ENCODE measurements at regions of chr1 and their contacts with region 1.

Region 1: DNA sequence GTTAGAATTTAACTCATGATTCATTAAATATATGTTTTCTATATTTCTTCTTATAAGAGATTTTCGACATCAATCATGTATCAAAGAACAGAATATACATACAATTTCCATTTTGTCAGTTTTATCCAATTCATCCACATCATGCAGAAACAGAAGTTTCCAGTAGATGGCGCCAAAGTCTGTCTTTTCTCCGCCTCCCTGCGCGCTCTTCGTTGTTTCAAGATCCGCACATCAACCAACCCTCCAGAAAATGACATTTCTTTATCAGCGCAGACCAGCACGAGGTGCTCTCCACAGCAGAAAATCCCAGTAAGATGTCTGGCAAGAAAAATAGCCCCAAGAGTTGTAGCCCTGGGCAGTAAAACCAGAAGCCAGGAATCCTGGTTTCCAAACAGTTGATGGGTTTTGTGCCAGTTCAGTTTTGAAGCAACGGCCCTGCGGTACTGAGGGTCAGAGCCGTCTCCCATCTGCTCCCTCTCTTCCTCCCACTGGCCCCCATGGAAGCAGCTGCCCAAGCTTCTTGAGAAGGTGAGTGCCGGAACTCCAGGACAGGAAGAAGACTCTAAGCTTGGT is 38.6 kb upstream of the GPR137B start:
- DNase-seq: no peak
- H3K4me3 ChIP-seq: no peak overlapping the region
- H3K27ac ChIP-seq: no peak overlapping the region
- H3K4me1 ChIP-seq: peaks cover 0 to 3% (median 0%) of the 10 kb centered on the region in 4 donors
- H3K27me3 ChIP-seq: no peaks in the 10 kb centered on the region
- CTCF ChIP-seq: peak; percentile 58 to 90 (median 67)
- EP300 ChIP-seq: no peak
- POLR2A ChIP-seq: no peak

Region 2: DNA sequence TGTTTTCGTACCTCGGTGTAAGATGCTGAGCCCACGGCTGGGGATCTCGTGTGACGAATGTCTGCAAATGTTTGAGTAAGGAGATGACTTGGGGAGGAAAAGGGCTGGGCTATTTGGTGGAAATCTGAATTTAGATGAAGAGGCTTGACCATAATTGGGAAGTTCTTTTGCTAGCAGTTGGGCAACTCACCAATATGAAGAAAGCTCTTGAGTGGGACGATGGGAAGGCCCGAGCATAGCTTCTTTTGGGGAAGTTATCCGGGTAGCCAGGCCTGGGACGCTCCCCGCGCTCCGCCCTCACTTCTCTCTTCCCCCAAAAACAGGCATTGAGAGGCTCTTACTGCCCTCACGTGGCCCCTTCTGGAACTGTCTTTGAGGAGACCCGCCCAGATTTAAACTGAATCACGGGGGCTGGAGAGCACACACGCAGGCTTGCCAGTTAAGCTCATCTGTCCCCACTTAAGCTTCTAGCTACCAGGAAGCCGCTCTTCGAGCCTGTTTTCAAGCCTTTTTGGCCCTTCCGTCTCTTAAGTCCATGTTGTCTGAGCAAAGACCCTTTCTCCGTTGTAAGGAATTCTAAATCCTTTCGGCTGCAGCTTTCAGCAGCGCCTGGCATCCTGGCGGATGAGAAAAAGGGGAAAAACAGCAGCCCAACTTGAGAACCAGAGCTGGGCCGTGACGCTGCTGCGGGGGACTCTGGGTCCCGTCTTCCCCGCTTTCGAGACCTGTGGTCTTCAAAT is 132.0 kb before region 1 on chr1:
- intact Hi-C with region 1: no loop called
- DNase-seq: peak; percentile 98
- H3K4me3 ChIP-seq: peak overlapping the region; percentile 10 to 52 (median 44)
- H3K27ac ChIP-seq: peak overlapping the region; percentile 88 to 98 (median 91)
- H3K4me1 ChIP-seq: peaks cover 0 to 22% (median 15%) of the 10 kb centered on the region in 4 donors
- H3K27me3 ChIP-seq: no peaks in the 10 kb centered on the region
- CTCF ChIP-seq: peak; percentile 76 to 82 (median 78)
- EP300 ChIP-seq: peak in 1 of 4 donors; percentile 3
- POLR2A ChIP-seq: peak; percentile 37 to 50

Region 3: GRCh38 chr1:236281654-236282424 is 178.1 kb after region 1 on chr1 and contains the start of gene ERO1B:
- intact Hi-C with region 1: loop called (anchors 5 kb)
- DNase-seq: peak; percentile 98
- H3K4me3 ChIP-seq: peak within 1 kb of the TSS; percentile 82 to 98 (median 94)
- H3K27ac ChIP-seq: peak within 1 kb of the TSS; percentile 87 to 92 (median 90)
- H3K4me1 ChIP-seq: peaks cover 0 to 16% (median 11%) of the 10 kb centered on the region in 4 donors
- H3K27me3 ChIP-seq: no peaks in the 10 kb centered on the region
- CTCF ChIP-seq: no peak
- EP300 ChIP-seq: peak in 1 of 4 donors; percentile 21
- POLR2A ChIP-seq: peak; percentile 80 to 91
- total RNA-seq, gene ERO1B: 9.0 to 17.2 (median 13.7) TPM

Region 4: GRCh38 chr1:236489710-236490377 is 386.1 kb after region 1 on chr1:
- intact Hi-C with region 1: loop called (anchors 1 kb)
- DNase-seq: no peak
- H3K4me3 ChIP-seq: no peak overlapping the region
- H3K27ac ChIP-seq: no peak overlapping the region
- H3K4me1 ChIP-seq: peaks cover 0 to 6% (median 2%) of the 10 kb centered on the region in 4 donors
- H3K27me3 ChIP-seq: no peaks in the 10 kb centered on the region
- CTCF ChIP-seq: peak in 3 of 4 experiments; percentile 42 to 64 (median 55)
- EP300 ChIP-seq: no peak
- POLR2A ChIP-seq: no peak

Region 5: DNA sequence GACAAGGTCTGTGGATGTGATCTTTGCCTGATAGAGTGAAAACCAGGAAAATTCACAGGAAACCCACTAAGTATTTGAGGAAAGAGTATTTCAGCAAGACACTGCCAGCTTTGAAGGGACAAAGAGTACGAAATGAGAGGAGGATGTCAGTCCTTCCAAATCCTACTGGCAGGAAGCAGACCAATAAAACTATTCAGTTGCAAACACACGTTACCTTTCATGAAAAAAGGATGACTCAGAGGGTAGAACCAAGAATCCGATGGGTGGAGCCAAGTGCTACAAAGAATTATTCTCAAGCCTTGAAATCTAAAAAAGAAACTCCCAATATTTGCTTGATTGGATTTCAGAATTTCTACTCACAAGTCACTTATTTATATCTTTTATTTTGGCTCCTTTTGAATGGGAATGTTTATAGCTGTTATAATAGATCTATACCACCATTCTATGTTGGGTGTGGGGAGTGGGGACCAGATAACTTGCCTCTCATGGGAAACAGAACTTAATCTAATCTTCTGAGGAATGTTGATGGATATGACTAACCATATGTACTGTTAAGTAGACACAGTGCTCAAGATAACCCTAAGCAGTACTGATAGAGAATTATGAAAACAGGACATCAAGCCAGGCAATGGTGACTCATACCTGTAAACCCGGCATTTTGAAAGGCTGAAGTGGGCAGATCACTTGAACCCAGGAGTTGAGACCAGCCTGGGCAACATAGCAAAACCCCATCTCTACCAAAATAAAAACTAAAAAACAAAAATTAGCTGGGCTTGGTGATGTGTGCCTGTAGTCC is 519.8 kb after region 1 on chr1:
- intact Hi-C with region 1: no loop called
- DNase-seq: no peak
- H3K4me3 ChIP-seq: no peak overlapping the region
- H3K27ac ChIP-seq: no peak overlapping the region
- H3K4me1 ChIP-seq: no peaks in the 10 kb centered on the region
- H3K27me3 ChIP-seq: no peaks in the 10 kb centered on the region
- CTCF ChIP-seq: no peak
- EP300 ChIP-seq: no peak
- POLR2A ChIP-seq: no peak

Region 6: GRCh38 chr1:237562242-237562823 is 1458.6 kb after region 1 on chr1:
- intact Hi-C with region 1: loop called (anchors 10 kb)
- DNase-seq: no peak
- H3K4me3 ChIP-seq: no peak overlapping the region
- H3K27ac ChIP-seq: no peak overlapping the region
- H3K4me1 ChIP-seq: no peaks in the 10 kb centered on the region
- H3K27me3 ChIP-seq: no peaks in the 10 kb centered on the region
- CTCF ChIP-seq: peak in 2 of 4 experiments; percentile 35 to 59
- EP300 ChIP-seq: no peak
- POLR2A ChIP-seq: no peak

Measured in sigmoid colon (tissue), 7 donors.